A673 (cell line): ENCODE measurements at regions of chr11 and their contacts with region 1.

Region 1: DNA sequence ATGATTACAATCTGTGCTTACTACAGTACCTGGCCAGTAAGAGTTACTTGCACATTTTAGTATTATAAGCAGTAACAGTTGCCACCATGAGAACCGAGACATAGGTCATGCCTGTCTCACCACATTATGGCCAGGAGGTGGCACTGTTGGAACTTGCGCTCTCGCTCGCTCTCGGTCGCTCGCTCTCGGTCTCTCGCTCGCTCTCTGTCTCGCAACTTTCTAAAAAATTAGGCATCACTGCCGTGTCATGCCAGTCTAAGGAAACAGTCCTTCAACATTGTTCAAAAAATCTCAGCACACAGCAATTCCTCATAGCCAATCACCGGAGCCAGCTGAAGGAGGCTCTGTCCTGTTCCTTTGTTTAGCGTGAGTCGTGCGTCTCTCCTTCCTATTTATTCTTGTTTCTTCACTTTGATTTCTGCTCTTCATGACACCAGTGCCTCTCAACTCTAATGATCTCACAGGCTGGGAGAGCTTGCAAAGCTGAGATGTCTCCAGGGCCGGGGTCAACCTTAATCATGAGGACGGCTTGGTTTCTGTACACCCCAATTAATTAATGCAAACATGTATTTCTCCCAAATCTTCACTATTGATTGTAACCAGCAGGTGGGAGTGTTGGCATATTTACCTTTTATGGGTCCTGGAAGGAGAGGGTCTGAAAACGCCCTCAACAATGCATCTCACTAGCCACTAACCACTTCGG is 6.3 kb upstream of the ADAMTS8 start:
- DNase-seq: peak; percentile 91
- H3K4me3 ChIP-seq: peak overlapping the region; percentile 59
- H3K27ac ChIP-seq: no peak overlapping the region
- H3K4me1 ChIP-seq: peaks cover 5% of the 10 kb centered on the region
- H3K27me3 ChIP-seq: peaks cover 19% of the 10 kb centered on the region
- CTCF ChIP-seq: peak; percentile 92

Region 2: DNA sequence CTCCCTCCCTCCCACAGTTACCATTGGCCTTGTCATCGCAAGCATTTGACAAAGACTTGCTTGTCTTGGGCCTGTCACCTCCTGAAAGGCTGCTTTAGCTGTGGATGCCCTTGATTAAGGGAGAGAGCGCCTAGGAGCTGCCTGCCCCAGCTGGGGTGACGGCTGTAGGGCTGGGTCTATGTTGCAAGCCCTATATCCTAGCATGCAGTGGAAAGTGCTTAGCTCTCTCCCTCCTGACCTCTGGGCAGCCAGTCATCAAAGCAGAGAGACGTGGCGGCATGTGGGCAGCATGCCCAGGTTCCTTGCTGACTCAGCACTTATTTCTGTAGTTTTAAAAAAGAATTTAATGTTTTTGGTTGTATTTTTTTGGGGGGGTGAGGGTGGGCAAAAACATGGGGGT is 983.1 kb before region 1 on chr11:
- CTCF ChIA-PET with region 1: interaction called, 12 read pairs
- POLR2A ChIA-PET with region 1: no interaction called
- intact Hi-C with region 1: no loop called
- DNase-seq: no peak
- H3K4me3 ChIP-seq: no peak overlapping the region
- H3K27ac ChIP-seq: no peak overlapping the region
- H3K4me1 ChIP-seq: no peaks in the 10 kb centered on the region
- H3K27me3 ChIP-seq: no peaks in the 10 kb centered on the region
- CTCF ChIP-seq: no peak

Region 3: DNA sequence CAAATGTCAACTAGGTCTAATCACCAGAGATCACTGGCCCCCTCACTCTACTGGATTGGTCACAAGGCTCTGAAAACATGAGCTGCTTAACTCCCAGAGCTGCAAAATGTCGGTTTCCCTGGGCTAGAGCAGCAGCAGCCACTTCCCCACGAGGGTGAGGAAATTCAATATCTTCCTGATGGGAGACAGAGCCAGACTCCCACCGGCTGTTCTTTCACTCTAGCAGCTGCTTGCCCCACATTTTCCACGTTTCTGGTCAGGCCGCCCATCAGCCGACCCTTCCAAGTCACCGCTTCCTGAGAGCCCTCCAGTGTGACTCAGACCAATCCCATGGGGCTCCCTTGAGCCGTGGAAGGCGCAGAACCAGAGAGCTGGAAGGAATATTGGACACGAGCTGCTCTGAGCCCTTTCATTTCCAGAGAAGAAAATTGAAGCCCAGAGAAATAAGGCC is 240.7 kb after region 1 on chr11:
- CTCF ChIA-PET with region 1: no interaction called
- POLR2A ChIA-PET with region 1: no interaction called
- intact Hi-C with region 1: loop called (anchors 2 kb)
- DNase-seq: peak; percentile 37
- H3K4me3 ChIP-seq: no peak overlapping the region
- H3K27ac ChIP-seq: no peak overlapping the region
- H3K4me1 ChIP-seq: no peaks in the 10 kb centered on the region
- H3K27me3 ChIP-seq: no peaks in the 10 kb centered on the region
- CTCF ChIP-seq: no peak

Region 4: DNA sequence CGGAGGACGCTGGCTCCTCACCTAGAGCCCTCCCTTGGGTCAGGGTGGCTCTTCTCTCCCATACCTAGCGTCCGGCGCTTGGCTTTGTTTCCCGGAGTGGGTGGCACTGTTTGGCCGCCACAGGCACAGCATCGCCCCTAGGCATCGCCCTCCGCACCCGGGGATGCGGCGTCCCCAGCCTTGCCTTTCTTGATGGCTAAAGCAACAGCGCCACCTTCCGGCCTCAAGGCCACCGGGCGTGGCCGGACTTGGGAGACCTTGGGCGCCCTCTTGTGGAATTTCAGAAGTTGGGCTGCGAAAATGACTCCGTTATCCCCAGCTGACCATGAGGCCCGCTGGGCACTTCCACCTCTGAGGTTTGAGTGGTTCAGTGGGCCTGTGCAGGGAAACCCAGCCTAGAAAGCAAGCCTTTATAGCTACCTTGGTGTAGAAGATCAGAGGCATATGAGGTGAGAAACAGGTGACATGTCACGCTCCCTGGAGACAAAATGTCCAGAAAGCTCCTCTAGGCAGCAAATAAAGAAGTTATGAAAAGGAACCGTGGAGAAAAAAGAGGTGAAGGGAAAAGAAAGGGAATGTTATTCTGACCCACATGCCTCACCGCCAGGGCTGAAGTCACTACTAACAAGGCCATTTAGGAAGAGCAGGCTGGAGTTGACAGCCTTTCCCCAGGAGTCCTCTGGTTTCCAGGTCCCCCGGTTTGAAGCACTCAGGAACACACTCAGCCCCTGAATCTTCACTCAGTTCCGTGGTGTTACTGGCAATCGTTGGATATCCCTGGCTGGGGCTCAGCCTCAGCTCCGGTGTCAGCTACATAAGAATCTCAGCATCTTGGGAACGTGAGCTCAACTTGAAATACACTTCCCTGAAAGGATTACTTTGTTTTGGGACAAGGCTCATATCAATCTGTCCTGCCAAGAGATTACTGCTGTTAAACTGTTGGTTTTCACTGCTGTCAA is 427.5 kb after region 1 on chr11:
- CTCF ChIA-PET with region 1: interaction called, 52 read pairs
- POLR2A ChIA-PET with region 1: no interaction called
- intact Hi-C with region 1: loop called (anchors 1 kb)
- DNase-seq: peak; percentile 96
- H3K4me3 ChIP-seq: no peak overlapping the region
- H3K27ac ChIP-seq: no peak overlapping the region
- H3K4me1 ChIP-seq: no peaks in the 10 kb centered on the region
- H3K27me3 ChIP-seq: no peaks in the 10 kb centered on the region
- CTCF ChIP-seq: peak; percentile 100

Region 5: DNA sequence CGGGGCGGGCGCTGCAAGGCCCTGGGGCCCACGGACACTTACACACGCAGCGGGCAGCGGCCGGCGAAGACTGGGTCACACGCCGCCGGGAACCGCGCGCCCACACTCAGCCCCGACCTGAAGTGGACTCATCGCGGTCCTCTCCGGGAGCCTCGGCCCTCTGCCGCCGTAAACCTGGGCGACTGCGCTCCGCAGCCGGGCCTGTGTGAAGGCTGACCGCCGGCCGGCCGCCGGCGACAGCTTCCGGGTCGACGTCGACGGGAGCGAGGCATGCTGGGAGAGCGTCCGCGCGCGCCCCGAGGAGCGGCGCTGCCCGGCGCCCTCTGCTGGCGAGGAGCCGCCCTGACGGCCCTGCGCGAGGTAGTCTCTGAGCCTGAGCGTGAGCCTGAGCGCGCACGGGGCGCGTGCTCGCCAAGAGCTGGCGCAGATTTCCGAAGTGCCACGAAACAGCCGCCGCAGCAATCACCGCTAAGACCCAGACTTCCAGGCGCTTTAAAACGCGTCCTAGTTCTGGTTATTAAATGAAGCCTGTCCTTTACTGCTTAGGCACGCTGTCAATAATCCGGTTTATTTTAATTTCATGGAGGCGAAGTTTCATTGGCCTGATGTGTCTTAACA is 481.7 kb after region 1 on chr11 and contains the start of gene SNX19:
- CTCF ChIA-PET with region 1: interaction called, 12 read pairs
- POLR2A ChIA-PET with region 1: no interaction called
- intact Hi-C with region 1: no loop called
- DNase-seq: peak; percentile 95
- H3K4me3 ChIP-seq: peak within 1 kb of the TSS; percentile 80
- H3K27ac ChIP-seq: peak within 1 kb of the TSS; percentile 82
- H3K4me1 ChIP-seq: peaks cover 4% of the 10 kb centered on the region
- H3K27me3 ChIP-seq: no peaks in the 10 kb centered on the region
- CTCF ChIP-seq: peak; percentile 93
- total RNA-seq, gene SNX19: 51.9 and 52.5 TPM in 2 replicates